Mammary epithelial cell (primary cell): ENCODE measurements at regions of chr16 and their contacts with region 1.

Region 1: DNA sequence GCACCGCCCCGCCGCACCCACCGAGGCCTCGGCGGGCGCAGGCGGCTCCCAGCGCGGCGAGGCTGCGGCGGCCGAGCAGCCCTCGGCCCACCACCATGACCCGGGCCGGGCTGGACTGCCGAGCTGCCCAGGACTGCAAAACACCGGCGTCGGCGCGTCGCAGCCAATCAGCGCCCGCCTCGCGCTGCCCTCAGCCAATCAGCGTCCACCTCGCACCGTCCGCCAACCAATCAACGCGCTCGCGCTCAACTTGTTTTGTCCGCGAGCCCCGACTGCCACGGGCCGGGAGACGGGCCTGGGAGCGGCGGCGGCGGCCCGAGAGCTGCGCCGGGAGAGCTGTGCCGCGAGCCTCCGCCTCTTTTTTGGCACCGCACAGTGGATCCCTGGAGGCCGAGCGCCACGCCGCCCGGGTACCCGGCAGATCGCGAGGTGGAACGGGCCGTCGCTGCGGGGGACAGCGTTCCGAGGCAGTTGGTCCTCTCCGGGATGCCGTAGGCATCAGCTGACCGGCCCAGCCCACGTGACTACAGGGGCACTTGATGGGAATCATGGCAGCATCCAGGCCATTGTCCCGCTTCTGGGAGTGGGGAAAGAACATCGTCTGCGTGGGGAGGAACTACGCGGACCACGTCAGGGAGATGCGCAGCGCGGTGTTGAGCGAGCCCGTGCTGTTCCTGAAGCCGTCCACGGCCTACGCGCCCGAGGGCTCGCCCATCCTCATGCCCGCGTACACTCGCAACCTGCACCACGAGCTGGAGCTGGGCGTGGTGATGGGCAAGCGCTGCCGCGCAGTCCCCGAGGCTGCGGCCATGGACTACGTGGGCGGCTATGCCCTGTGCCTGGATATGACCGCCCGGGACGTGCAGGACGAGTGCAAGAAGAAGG is at the starts of genes FAHD1 and HAGH:
- DNase-seq: peak; percentile 94
- H3K4me3 ChIP-seq: peak within 1 kb of the TSS; percentile 87 to 99 (median 97)
- H3K27ac ChIP-seq: peak within 1 kb of the TSS; percentile 61
- H3K4me1 ChIP-seq: peaks cover 22% of the 10 kb centered on the region
- H3K27me3 ChIP-seq: no peaks in the 10 kb centered on the region
- CTCF ChIP-seq: no peak
- total RNA-seq, gene FAHD1: 33.1 to 61.3 TPM
- total RNA-seq, gene HAGH: 38.7 to 43.8 TPM

Region 2: DNA sequence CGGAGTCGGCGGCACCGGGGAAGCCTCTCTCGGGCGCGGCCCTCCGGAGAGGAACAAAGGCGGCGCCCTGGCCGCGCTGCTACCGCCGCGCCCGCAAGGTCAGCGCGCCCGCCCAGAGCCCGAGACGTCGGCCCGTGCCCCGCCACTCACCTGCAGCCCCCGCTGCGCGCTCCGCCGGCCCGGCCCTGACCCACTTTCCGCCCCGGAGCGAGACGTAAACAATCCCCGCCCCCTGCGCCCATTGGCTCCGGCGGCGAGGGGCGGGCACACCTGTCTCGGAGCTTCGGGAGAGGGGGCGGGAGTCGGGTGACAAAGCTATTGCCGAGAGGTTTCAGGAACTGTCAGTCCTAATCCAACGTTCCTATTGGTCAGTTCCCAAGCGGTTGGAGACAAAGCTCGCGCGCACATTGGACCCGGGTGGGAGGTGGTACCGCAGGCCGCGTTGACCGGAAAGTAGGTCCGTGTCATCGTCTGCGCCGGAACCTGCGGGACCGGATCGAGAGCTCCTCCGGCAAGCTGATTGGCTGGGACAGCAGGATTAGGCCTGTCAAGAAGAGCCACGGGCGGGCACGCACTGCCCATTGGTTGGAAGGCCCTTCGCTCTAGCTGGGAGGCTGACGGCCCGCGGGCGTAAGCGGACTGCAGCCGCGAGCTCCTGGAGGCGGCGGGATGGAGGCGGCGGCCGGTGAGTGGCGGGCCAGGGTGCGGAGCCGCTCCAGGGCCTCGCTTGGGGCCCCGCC is 44.4 kb before region 1 on chr16 and contains the starts of genes NUBP2 and SPSB3:
- CTCF ChIA-PET with region 1: no interaction called
- dilution Hi-C with region 1: no loop called
- in situ Hi-C with region 1: no loop called
- intact Hi-C with region 1: loop called (anchors 2 kb)
- DNase-seq: peak; percentile 100
- H3K4me3 ChIP-seq: peak within 1 kb of the TSS; percentile 82 to 90 (median 83)
- H3K27ac ChIP-seq: peak within 1 kb of the TSS; percentile 47
- H3K4me1 ChIP-seq: peaks cover 30% of the 10 kb centered on the region
- H3K27me3 ChIP-seq: no peaks in the 10 kb centered on the region
- CTCF ChIP-seq: no peak
- total RNA-seq, gene NUBP2: 64.3 to 67.0 TPM
- total RNA-seq, gene SPSB3: 20.9 to 43.0 TPM

Region 3: DNA sequence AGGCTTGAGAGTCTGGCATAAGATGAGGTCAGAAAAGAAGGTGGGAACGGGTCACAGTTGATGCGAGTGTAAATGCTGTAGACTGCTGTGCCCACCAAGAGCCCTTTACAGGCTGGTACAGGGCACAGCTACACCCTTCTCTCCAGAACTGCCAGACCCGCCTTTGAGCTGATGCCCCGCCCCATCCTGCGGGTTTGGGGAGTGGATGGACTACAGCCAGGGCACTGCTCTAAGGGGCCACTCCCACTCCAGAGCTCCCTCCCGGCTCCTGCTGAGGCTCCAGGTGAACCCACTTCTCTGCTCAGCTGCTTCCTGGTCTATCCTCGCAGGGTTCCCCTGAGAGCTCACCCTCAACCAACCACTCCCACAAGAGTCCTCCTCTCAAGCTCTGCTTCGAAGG is 32.7 kb after region 1 on chr16:
- CTCF ChIA-PET with region 1: no interaction called
- dilution Hi-C with region 1: no loop called
- in situ Hi-C with region 1: no loop called
- intact Hi-C with region 1: no loop called
- DNase-seq: no peak
- H3K4me3 ChIP-seq: no peak overlapping the region
- H3K27ac ChIP-seq: no peak overlapping the region
- H3K4me1 ChIP-seq: peaks cover 3% of the 10 kb centered on the region
- H3K27me3 ChIP-seq: no peaks in the 10 kb centered on the region
- CTCF ChIP-seq: no peak